Sciatic nerve (tissue), 2 donors: ENCODE measurements at regions of chr17 and their contacts with region 1.

Region 1: DNA sequence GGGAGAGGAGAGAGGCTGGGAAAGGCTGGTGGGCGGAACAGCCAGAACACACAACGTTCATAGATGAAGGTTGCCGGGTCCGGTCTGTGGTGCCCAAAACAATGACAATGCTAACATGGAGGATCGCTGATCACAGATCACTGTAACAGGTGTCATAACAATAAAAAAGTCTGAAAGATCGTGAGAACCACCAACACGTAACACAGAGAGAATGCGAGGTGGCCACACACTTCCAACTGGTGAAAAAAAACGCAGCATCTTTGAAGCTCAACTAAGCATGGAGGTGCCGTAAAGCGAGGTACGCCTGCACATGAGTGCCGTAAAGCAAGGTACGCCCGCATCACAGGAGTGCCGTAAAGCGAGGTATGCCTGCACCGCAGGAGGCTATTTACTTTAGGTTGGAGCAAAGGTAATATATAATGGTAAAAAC is 42.3 kb downstream of the ABR start:
- DNase-seq: no peak
- ATAC-seq: peak; percentile 50

Region 2: GRCh38 chr17:588519-588918 is 549.0 kb before region 1 on chr17:
- intact Hi-C with region 1: loop called (anchors 5 kb)
- DNase-seq: no peak
- ATAC-seq: no peak

Region 3: DNA sequence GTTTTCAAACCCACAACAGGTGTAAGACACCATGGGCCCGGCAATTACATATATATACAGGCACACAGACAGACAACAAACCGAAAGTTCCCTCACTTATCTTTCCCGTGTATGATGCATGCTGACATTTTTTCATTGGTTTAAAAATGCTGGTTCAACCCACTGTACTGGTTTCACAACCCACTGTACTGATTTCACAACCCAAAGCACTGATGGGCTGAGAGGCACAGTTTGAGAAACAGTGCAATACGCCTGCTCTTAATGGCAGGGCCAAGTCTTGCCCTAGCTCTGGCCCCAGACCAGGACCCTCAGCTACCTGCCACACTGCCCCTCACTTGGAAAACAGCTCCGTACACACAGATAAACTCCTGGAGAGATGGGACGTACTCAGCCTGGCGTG is 39.1 kb before region 1 on chr17:
- intact Hi-C with region 1: no loop called
- DNase-seq: no peak
- ATAC-seq: peak; percentile 79